Activated T-helper 2 cell treated with anti-CD3 and anti-CD28 coated beads, Interferon-gamma antibody, Interleukin-2, Interleukin-4, amounts not matched to agents 10 μg/mL and 5 μg/mL and 100 μg/mL, durations not matched to agents 14 hours and 24 hours and 36 hours (primary cell): ENCODE measurements at regions of chr10 and their contacts with region 1.

Region 1: GRCh38 chr10:96978621-96979154 is 146.6 kb downstream of the LCOR start:
- DNase-seq: no peak
- H3K4me3 Mint-ChIP-seq: peak overlapping the region; percentile 66
- H3K27ac Mint-ChIP-seq: peak overlapping the region; percentile 94
- H3K4me1 Mint-ChIP-seq: peaks cover 48% of the 10 kb centered on the region
- H3K27me3 Mint-ChIP-seq: no peaks in the 10 kb centered on the region

Region 2: DNA sequence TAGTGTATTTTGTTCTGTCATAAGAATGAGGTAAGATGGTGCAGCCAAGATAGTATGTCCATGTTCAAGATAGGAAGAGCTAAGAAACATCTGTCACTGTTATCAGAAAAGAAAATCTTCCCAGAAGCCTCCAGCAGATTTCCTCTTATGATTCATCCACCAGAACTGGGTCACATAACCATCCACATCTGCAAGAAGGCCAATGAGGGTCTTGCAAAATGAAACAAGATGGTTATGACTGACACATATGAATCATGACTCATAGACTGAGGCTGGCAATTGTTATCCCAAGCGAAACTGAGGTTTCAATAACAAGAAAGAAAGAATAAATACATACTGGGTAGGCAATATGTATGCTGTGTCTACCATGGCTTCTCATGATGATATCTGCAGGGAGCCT is 905.0 kb before region 1 on chr10:
- intact Hi-C with region 1: loop called (anchors 5 kb)
- DNase-seq: peak; percentile 18
- H3K4me3 Mint-ChIP-seq: no peak overlapping the region
- H3K27ac Mint-ChIP-seq: peak overlapping the region; percentile 20
- H3K4me1 Mint-ChIP-seq: peaks cover 32% of the 10 kb centered on the region
- H3K27me3 Mint-ChIP-seq: no peaks in the 10 kb centered on the region

Region 3: DNA sequence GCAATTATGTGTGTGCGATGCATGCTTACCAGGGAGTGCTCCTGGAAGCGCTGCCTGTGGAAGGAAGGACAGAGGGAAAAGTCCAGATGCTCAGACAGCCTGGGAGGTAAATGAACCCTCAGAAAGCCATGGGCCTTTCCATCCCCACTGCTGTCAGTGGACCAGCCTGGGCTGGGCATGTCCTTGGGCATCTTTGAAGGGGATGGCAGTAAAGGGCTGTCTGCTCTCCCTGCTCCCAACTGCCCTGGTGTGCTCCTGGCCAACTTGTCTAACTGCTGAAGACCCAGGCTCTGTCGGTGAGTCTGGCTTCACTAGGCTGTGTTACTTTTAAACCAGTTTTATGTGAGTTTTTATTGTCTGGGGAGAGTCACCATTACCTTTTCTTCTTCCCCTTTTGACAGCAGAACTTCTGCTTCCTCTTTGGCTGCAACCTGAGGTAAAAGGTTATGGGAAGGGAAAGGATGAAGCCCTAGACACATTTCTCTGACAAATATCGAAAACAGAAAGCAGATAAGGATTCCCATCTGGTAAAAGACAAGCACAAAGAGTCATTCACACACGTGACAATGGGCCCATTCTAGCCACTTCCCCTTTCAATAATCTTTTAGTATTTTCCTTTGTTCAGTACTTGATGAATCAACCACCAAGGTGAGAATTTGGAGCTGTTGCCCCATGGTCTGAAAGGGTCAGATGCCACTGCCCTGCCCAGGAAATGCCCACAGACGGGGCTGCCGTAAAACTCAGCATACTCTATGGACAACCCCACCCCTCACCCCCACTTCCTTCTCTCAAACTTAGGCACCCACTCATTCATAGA is 230.7 kb before region 1 on chr10:
- intact Hi-C with region 1: loop called (anchors 1 kb)
- DNase-seq: peak; percentile 20
- H3K4me3 Mint-ChIP-seq: peak overlapping the region; percentile 26
- H3K27ac Mint-ChIP-seq: peak overlapping the region; percentile 51
- H3K4me1 Mint-ChIP-seq: peaks cover 18% of the 10 kb centered on the region
- H3K27me3 Mint-ChIP-seq: peaks cover 19% of the 10 kb centered on the region

Region 4: GRCh38 chr10:96896884-96897589 is 81.7 kb before region 1 on chr10:
- intact Hi-C with region 1: loop called (anchors 2 kb)
- DNase-seq: no peak
- H3K4me3 Mint-ChIP-seq: no peak overlapping the region
- H3K27ac Mint-ChIP-seq: peak overlapping the region; percentile 36
- H3K4me1 Mint-ChIP-seq: peaks cover 39% of the 10 kb centered on the region
- H3K27me3 Mint-ChIP-seq: no peaks in the 10 kb centered on the region

Region 5: GRCh38 chr10:96922978-96923948 is 55.4 kb before region 1 on chr10:
- intact Hi-C with region 1: loop called (anchors 1 kb)
- DNase-seq: no peak
- H3K4me3 Mint-ChIP-seq: no peak overlapping the region
- H3K27ac Mint-ChIP-seq: peak overlapping the region; percentile 19
- H3K4me1 Mint-ChIP-seq: peaks cover 31% of the 10 kb centered on the region
- H3K27me3 Mint-ChIP-seq: no peaks in the 10 kb centered on the region

Region 6: DNA sequence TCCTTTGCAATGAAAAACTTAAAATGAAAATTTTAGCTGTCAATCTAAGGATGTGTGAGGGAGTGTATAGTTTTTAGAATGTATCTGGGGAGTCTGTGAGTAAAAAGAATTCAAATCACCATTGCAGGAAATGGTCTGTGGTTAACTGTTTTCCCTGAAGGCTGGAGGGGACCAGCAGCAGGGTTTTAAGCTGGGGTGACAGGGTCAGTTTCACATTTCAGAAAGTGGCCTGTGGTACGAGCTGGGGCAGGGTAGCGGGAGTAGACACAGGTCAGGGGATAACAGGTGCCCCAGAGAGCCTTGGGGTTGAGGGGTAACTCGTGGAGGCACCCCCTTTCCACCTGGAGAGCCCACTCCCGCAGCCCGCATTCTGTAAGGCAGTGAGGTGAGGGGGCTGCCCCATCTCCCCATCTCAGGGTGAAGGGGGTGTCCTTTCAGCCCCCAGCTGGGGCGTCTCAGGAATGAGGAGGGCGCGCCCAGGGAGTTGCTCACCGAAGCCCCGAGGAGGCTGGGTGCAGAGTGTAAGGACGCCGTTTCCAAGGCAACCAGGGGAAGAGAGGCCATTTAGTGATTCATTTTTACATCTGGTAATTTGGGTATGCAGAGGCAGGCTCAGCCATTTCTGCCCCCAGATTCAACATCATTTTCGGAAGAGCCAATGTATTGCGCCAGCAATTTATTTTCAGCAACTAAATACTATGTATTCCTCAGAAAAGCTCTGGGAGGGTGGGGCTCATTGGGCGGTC is 38.2 kb after region 1 on chr10:
- intact Hi-C with region 1: loop called (anchors 1 kb)
- DNase-seq: peak; percentile 17
- H3K4me3 Mint-ChIP-seq: peak overlapping the region; percentile 4
- H3K27ac Mint-ChIP-seq: peak overlapping the region; percentile 79
- H3K4me1 Mint-ChIP-seq: peaks cover 19% of the 10 kb centered on the region
- H3K27me3 Mint-ChIP-seq: no peaks in the 10 kb centered on the region

Region 7: GRCh38 chr10:97138174-97138573 is 159.5 kb after region 1 on chr10:
- intact Hi-C with region 1: no loop called
- DNase-seq: no peak
- H3K4me3 Mint-ChIP-seq: no peak overlapping the region
- H3K27ac Mint-ChIP-seq: no peak overlapping the region
- H3K4me1 Mint-ChIP-seq: no peaks in the 10 kb centered on the region
- H3K27me3 Mint-ChIP-seq: peaks cover under 1% of the 10 kb centered on the region